Caco-2 (cell line): ENCODE measurements at regions of chr2 and their contacts with region 1.

Region 1: DNA sequence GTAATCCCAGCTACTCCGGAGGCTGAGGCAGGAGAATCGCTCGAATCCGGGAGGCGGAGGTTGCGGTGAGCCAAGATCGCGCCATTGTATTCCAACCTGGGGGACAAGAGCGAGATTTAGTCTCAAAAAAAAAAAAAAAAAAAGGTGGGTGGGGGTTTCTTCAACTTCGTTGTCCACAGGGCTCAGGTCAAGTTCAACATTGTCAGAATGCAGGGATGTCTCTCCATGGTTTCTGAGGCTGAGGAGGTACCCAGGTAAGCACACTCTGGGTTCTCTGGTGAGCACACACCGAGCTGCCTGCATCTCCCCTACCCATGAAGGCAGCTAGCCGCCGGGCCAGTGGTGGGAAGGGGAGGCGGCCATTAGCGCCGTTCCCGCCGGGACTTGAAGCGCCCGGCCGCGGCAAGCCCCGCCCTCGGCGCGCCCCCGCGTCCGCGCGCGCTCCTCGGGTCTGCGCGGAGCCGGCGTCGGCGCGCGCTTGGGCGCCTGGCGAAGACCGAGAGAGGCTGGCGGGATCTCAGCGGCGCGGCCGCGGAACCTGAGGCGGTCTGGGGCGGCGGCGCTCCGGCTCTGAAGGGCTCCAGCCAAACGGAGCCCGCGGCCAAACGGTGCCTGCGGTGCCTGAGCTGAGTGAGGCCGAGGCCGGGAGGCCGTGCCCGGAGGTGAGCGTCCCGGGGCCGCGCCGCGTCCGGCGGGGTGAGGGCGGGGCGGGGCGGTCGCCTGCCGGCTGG is at the start of gene UBXN2A:
- DNase-seq: peak; percentile 75 to 90
- H3K4me3 ChIP-seq: peak within 1 kb of the TSS; percentile 56
- H3K4me3 Mint-ChIP-seq: peak within 1 kb of the TSS; percentile 76
- H3K27ac Mint-ChIP-seq: peak within 1 kb of the TSS; percentile 51
- H3K4me1 ChIP-seq: peaks cover 5% of the 10 kb centered on the region
- H3K4me1 Mint-ChIP-seq: peaks cover 18% of the 10 kb centered on the region
- H3K27me3 ChIP-seq: no peaks in the 10 kb centered on the region
- H3K27me3 Mint-ChIP-seq: no peaks in the 10 kb centered on the region
- CTCF ChIP-seq: no peak
- total RNA-seq, gene UBXN2A: 21.6 and 22.0 TPM in 2 replicates

Region 2: DNA sequence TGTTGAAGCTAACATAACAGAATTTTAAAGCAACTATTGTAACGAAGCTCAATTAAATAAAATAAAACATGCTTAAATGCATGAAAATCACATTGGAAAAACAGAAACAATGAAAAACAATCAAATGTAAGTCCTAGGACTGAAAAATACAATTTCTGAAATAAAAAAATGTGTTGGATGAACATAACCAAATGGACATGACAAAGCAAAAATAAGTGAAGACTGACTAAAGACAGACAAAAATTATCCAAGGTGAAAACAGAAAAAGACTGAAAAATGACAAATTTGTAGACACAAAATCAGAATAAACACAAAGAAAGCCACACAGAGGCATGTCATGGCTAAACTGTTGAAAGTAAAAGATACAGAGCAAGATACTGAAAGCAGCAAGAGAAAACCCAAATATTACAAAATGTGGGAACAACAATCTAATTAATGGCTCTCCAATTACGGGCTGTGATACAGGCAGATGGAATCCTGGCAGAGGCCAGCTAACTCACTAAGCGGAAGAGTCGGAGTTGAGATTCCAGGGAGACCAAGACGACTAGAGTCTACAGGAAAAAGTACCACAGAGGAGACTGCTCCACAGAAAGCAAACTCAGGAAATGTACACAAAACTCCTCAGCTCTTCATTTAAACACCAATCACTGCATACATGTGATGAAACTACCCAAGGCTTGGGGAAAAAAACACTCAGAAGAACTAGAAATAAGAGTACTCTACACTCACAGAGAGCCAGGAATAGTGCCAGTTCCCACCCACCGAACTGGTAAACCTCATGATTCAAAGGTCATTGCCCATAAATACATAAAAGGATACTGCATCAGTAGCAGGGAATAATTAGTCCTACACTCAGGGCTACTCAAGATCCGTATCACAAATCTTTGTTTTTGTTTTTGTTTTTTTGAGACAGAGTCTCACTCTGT is 96.8 kb before region 1 on chr2:
- CTCF ChIA-PET with region 1: no interaction called
- POLR2A ChIA-PET with region 1: no interaction called
- intact Hi-C with region 1: no loop called
- DNase-seq: no peak
- H3K4me3 ChIP-seq: no peak overlapping the region
- H3K4me3 Mint-ChIP-seq: no peak overlapping the region
- H3K27ac Mint-ChIP-seq: no peak overlapping the region
- H3K4me1 ChIP-seq: no peaks in the 10 kb centered on the region
- H3K4me1 Mint-ChIP-seq: peaks cover 12% of the 10 kb centered on the region
- H3K27me3 ChIP-seq: no peaks in the 10 kb centered on the region
- H3K27me3 Mint-ChIP-seq: no peaks in the 10 kb centered on the region
- CTCF ChIP-seq: no peak

Region 3: GRCh38 chr2:23993736-23994269 is 53.7 kb after region 1 on chr2:
- CTCF ChIA-PET with region 1: no interaction called
- POLR2A ChIA-PET with region 1: no interaction called
- intact Hi-C with region 1: loop called (anchors 2 kb)
- DNase-seq: no peak
- H3K4me3 ChIP-seq: no peak overlapping the region
- H3K4me3 Mint-ChIP-seq: no peak overlapping the region
- H3K27ac Mint-ChIP-seq: no peak overlapping the region
- H3K4me1 ChIP-seq: no peaks in the 10 kb centered on the region
- H3K4me1 Mint-ChIP-seq: peaks cover 8% of the 10 kb centered on the region
- H3K27me3 ChIP-seq: no peaks in the 10 kb centered on the region
- H3K27me3 Mint-ChIP-seq: no peaks in the 10 kb centered on the region
- CTCF ChIP-seq: no peak